HAP-1 (cell line): ENCODE measurements at regions of chr4 and their contacts with region 1.

Region 1: GRCh38 chr4:88526221-88526815 is 2.7 kb upstream of the PYURF start:
- DNase-seq: peak in 1 of 2 experiments; percentile 47
- H3K4me3 ChIP-seq: no peak overlapping the region
- H3K4me1 ChIP-seq: peaks cover 10% of the 10 kb centered on the region
- H3K27me3 ChIP-seq: no peaks in the 10 kb centered on the region

Region 2: GRCh38 chr4:88661739-88662138 is 135.4 kb after region 1 on chr4:
- in situ Hi-C with region 1: loop called (anchors 5 kb)
- DNase-seq: no peak
- H3K4me3 ChIP-seq: no peak overlapping the region
- H3K4me1 ChIP-seq: no peaks in the 10 kb centered on the region
- H3K27me3 ChIP-seq: no peaks in the 10 kb centered on the region

Region 3: DNA sequence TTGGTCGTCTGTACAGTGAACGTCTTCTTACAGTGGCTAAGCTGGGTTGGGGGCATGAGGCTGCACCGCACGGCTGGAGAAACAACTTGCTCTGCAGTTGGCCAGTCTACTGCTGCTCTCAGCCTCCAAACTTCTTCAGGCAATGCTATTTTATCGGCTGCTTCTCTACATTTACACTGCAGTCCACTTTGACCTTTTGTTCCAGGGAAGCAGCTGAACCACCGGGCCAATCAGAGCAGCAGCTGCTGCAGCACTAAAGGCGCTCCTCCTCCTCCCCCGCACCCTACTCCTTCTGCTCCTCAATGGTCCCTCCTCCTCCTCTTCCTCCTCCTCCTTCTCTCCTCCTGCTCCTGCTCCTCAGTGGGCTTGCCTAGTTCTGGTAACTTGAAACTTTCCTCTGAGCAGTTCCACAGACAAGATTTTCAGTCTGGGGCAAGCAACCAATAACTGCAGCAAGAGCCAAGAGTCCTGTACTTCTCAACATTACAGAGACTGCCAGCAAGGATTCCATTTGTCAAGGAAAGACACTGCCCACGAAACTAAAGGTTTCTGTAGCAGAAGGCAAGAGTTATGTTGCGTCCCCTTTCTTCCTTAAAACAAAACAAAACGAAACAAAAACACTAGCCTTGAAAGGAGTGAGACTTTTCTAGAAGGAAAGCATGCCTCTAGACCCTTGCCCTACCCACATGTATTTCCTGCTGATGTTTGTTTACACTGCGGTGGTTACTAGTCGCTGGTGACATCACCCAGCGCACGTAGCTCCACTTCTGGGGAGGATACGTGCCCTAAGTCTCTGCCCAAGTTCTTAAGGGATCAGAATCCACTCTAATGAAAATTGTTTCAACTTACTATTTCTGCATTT is 297.0 kb after region 1 on chr4:
- in situ Hi-C with region 1: loop called (anchors 25 kb)
- DNase-seq: peak; percentile 90 to 94
- H3K4me3 ChIP-seq: peak overlapping the region; percentile 26
- H3K4me1 ChIP-seq: peaks cover 20% of the 10 kb centered on the region
- H3K27me3 ChIP-seq: no peaks in the 10 kb centered on the region

Region 4: GRCh38 chr4:88964450-88964849 is 438.1 kb after region 1 on chr4:
- in situ Hi-C with region 1: no loop called
- DNase-seq: no peak
- H3K4me3 ChIP-seq: no peak overlapping the region
- H3K4me1 ChIP-seq: peaks cover 16% of the 10 kb centered on the region
- H3K27me3 ChIP-seq: no peaks in the 10 kb centered on the region

Region 5: GRCh38 chr4:89029591-89029990 is 503.3 kb after region 1 on chr4:
- in situ Hi-C with region 1: loop called (anchors 25 kb)
- DNase-seq: no peak
- H3K4me3 ChIP-seq: no peak overlapping the region
- H3K4me1 ChIP-seq: no peaks in the 10 kb centered on the region
- H3K27me3 ChIP-seq: no peaks in the 10 kb centered on the region